Activated CD4-positive, alpha-beta memory T cell treated with anti-CD3 and anti-CD28 coated beads for 36 hours (primary cell): ENCODE measurements at regions of chr16 and their contacts with region 1.

Region 1: GRCh38 chr16:48623304-48624016 is 13.5 kb upstream of the N4BP1 start:
- DNase-seq: peak; percentile 89
- H3K4me3 Mint-ChIP-seq: peak overlapping the region; percentile 71
- H3K27ac Mint-ChIP-seq: peak overlapping the region; percentile 45
- H3K4me1 Mint-ChIP-seq: peaks cover 15% of the 10 kb centered on the region
- H3K27me3 Mint-ChIP-seq: peaks cover 3% of the 10 kb centered on the region

Region 2: DNA sequence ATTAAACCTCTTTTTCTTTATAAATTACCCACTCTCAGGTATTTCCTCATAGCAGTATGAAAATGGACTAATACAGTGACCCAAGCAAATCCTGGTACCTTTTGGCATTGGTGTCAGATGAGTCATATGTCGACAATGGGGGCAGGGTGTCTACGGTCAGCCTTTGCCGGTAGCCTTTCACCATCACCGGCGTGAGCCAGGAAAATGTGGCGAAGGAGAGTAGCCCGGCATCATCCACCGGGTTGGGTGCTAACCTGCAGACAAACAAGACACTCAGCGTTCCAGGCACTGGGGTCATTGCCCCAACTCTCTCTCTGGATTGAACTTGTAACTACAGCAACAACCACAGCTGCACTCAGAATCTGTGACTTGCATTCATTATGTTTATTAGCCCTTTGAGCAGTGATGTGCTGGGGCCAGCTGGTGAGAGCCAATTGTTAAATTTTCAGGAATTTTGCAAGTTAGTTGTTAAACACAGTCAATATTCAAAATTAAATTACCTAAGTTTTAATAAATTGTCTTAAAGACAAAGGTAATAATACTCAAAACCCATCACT is 479.6 kb before region 1 on chr16:
- CTCF ChIA-PET with region 1: no interaction called
- POLR2A ChIA-PET with region 1: no interaction called
- intact Hi-C with region 1: no loop called
- DNase-seq: no peak
- H3K4me3 Mint-ChIP-seq: no peak overlapping the region
- H3K27ac Mint-ChIP-seq: no peak overlapping the region
- H3K4me1 Mint-ChIP-seq: no peaks in the 10 kb centered on the region
- H3K27me3 Mint-ChIP-seq: peaks cover 9% of the 10 kb centered on the region

Region 3: DNA sequence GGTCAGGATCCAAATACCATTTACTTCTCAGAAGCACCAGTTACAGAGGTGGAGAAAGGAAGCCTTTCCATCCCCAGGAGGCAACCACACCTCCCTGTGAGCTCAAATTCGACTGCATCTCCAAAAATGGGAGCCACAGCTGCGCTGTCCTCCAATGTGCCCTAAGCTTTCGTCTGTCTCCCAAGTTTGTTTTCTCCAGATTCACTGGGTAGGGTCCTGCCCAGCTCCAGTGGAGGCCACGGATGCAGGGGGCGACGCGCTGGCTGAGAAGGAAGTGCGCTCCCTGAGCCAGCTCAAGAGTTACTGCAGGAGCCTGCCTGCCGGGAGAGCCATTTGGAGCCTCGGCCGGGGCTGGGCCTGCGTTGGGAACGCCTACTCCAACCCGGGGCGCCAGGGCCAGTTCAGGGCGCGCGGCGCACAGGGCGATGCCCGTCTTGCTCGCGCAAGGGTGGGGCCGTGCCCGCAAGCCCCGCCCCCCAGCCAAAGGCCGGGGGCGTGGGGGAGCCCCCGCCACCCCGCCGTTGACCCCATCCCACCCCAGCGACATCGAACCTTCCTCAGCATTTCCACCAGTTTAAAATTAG is 257.8 kb before region 1 on chr16:
- CTCF ChIA-PET with region 1: interaction called, 44 read pairs
- POLR2A ChIA-PET with region 1: interaction called, 3 read pairs
- intact Hi-C with region 1: no loop called
- DNase-seq: peak; percentile 91
- H3K4me3 Mint-ChIP-seq: peak overlapping the region; percentile 85
- H3K27ac Mint-ChIP-seq: peak overlapping the region; percentile 94
- H3K4me1 Mint-ChIP-seq: peaks cover 41% of the 10 kb centered on the region
- H3K27me3 Mint-ChIP-seq: no peaks in the 10 kb centered on the region

Region 4: DNA sequence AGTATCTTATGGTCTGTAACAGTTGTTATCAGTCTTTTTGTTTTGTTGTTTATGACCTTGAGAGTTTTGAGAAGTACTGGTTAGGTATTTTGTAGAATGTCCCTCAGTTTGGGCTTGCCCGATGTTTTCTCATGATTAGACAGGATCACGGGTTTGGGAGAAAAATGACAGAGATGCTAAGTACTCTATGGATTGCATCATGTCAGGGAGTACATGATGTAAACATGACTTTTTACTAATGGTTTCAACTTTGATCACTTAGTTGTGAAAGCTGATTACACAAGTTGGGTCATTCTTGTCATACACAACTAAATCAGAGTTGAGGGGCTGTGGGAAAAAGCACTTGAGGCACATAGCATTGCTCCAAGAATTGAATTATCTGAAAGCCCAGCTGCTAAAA is 143.5 kb before region 1 on chr16:
- CTCF ChIA-PET with region 1: interaction called, 13 read pairs
- POLR2A ChIA-PET with region 1: no interaction called
- intact Hi-C with region 1: no loop called
- DNase-seq: no peak
- H3K4me3 Mint-ChIP-seq: no peak overlapping the region
- H3K27ac Mint-ChIP-seq: no peak overlapping the region
- H3K4me1 Mint-ChIP-seq: peaks cover 4% of the 10 kb centered on the region
- H3K27me3 Mint-ChIP-seq: peaks cover 21% of the 10 kb centered on the region

Region 5: GRCh38 chr16:48542020-48542473 is 81.4 kb before region 1 on chr16:
- CTCF ChIA-PET with region 1: interaction called, 34 read pairs
- POLR2A ChIA-PET with region 1: no interaction called
- intact Hi-C with region 1: loop called (anchors 2 kb)
- DNase-seq: peak; percentile 25
- H3K4me3 Mint-ChIP-seq: no peak overlapping the region
- H3K27ac Mint-ChIP-seq: no peak overlapping the region
- H3K4me1 Mint-ChIP-seq: peaks cover 16% of the 10 kb centered on the region
- H3K27me3 Mint-ChIP-seq: no peaks in the 10 kb centered on the region

Region 6: DNA sequence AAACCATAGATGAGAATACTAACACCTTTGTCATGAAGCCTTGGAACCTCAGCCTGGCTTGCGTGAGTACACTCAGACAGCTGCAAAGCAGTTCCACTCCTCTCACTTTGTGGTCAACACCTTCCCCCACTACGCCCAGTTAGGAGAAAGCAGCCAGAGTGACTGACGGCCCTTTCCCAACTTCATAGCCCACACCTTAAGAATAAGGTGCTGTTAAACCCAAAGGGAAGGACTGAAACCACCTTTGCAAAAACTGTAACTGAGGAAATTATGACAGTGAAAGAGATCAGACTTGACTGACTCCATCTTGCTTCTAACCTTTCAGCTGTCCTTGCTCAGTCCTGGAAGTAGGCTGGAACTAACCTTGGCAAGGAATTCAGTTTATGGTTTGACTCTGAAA is 27.1 kb before region 1 on chr16:
- CTCF ChIA-PET with region 1: interaction called, 10 read pairs
- POLR2A ChIA-PET with region 1: interaction called, 3 read pairs
- intact Hi-C with region 1: no loop called
- DNase-seq: peak; percentile 77
- H3K4me3 Mint-ChIP-seq: no peak overlapping the region
- H3K27ac Mint-ChIP-seq: peak overlapping the region; percentile 64
- H3K4me1 Mint-ChIP-seq: peaks cover 54% of the 10 kb centered on the region
- H3K27me3 Mint-ChIP-seq: no peaks in the 10 kb centered on the region

Region 7: GRCh38 chr16:48687421-48688038 is 64.1 kb after region 1 on chr16:
- CTCF ChIA-PET with region 1: no interaction called
- POLR2A ChIA-PET with region 1: no interaction called
- intact Hi-C with region 1: no loop called
- DNase-seq: peak; percentile 51
- H3K4me3 Mint-ChIP-seq: no peak overlapping the region
- H3K27ac Mint-ChIP-seq: no peak overlapping the region
- H3K4me1 Mint-ChIP-seq: no peaks in the 10 kb centered on the region
- H3K27me3 Mint-ChIP-seq: peaks cover 12% of the 10 kb centered on the region

Region 8: GRCh38 chr16:48810803-48811453 is 187.5 kb after region 1 on chr16:
- CTCF ChIA-PET with region 1: no interaction called
- POLR2A ChIA-PET with region 1: no interaction called
- intact Hi-C with region 1: no loop called
- DNase-seq: no peak
- H3K4me3 Mint-ChIP-seq: no peak overlapping the region
- H3K27ac Mint-ChIP-seq: no peak overlapping the region
- H3K4me1 Mint-ChIP-seq: no peaks in the 10 kb centered on the region
- H3K27me3 Mint-ChIP-seq: peaks cover 24% of the 10 kb centered on the region

Region 9: DNA sequence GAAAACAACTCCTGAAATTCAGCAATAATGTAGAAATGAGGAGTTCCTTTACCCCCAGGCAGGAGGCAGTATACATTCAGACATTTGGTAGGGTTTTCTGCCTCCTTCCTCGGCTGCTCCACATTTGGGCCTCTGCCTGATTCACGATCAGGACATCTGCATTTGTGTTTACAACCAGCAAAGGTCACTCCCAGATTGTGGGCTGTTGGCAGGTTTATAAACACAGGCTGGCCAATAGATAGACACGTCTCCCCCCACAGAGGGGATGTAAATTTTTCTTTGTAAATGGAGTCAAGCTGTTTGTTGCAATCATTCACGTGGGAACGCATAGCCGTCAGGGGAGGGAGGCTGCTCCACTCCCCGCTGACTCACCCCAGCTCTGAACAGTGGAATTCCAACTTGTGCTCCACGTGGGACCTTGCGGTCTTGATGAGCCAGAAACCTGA is 238.7 kb after region 1 on chr16:
- CTCF ChIA-PET with region 1: no interaction called
- POLR2A ChIA-PET with region 1: no interaction called
- intact Hi-C with region 1: no loop called
- DNase-seq: no peak
- H3K4me3 Mint-ChIP-seq: no peak overlapping the region
- H3K27ac Mint-ChIP-seq: no peak overlapping the region
- H3K4me1 Mint-ChIP-seq: no peaks in the 10 kb centered on the region
- H3K27me3 Mint-ChIP-seq: no peaks in the 10 kb centered on the region